ENCODE measurements at regions of chr11 and their contacts with region 1.

Region 1: GRCh38 chr11:8111636-8112035 is 30.6 kb downstream of the TUB start:
- ATAC-seq: no peak
- H3K4me3 ChIP-seq: no peak overlapping the region
- H3K27ac ChIP-seq: no peak overlapping the region
- H3K4me1 ChIP-seq: no peaks in the 10 kb centered on the region

Region 2: GRCh38 chr11:8006349-8006977 is 105.2 kb before region 1 on chr11:
- in situ Hi-C with region 1: loop called in 1 of 9 experiments (anchors 25 kb)
- ATAC-seq: peak; percentile 91 to 99 (median 96)
- H3K4me3 ChIP-seq: no peak overlapping the region
- H3K27ac ChIP-seq: no peak overlapping the region
- H3K4me1 ChIP-seq: no peaks in the 10 kb centered on the region

Region 3: GRCh38 chr11:8033305-8034105 is 78.1 kb before region 1 on chr11:
- in situ Hi-C with region 1: no loop called
- ATAC-seq: peak; percentile 70 to 94 (median 87)
- H3K4me3 ChIP-seq: no peak overlapping the region
- H3K27ac ChIP-seq: no peak overlapping the region
- H3K4me1 ChIP-seq: peaks cover 37 to 51% of the 10 kb centered on the region in 2 donors